Activated T-helper 1 cell treated with anti-CD3 and anti-CD28 coated beads, Interleukin-12 subunit alpha, Interleukin-12 subunit beta, Interleukin-2, Interleukin-4 antibody, amounts not matched to agents 30 ng/mL and 10 ng/mL and 1 ng/mL, durations not matched to agents 14 hours and 24 hours and 36 hours (primary cell): ENCODE measurements at regions of chr1 and their contacts with region 1.

Region 1: GRCh38 chr1:198088360-198089071 is 68.3 kb upstream of the NEK7 start:
- DNase-seq: no peak
- H3K4me3 Mint-ChIP-seq: no peak overlapping the region
- H3K27ac Mint-ChIP-seq: no peak overlapping the region
- H3K4me1 Mint-ChIP-seq: peaks cover 8% of the 10 kb centered on the region
- H3K27me3 Mint-ChIP-seq: peaks cover 5% of the 10 kb centered on the region

Region 2: DNA sequence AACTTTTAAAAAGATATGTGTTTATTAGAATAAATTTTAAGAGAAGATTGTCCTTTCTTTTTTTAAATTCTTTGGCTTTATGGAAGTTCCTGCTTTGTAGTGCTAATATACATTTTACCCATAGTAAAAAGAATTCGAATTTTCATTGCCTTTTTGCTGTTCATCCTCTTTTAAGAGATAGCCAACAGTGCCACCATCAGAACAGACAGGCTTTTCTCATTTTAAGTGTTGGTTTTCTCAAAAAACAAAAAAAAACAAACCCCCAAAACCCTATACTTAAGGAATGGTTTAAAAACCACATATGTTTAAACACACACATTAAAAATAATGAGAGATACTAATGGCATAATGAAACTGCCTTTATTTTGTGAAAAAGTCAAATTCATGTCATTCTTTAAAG is 187.1 kb after region 1 on chr1:
- intact Hi-C with region 1: loop called (anchors 5 kb)
- DNase-seq: no peak
- H3K4me3 Mint-ChIP-seq: no peak overlapping the region
- H3K27ac Mint-ChIP-seq: no peak overlapping the region
- H3K4me1 Mint-ChIP-seq: no peaks in the 10 kb centered on the region
- H3K27me3 Mint-ChIP-seq: no peaks in the 10 kb centered on the region

Region 3: GRCh38 chr1:198328458-198329127 is 240.1 kb after region 1 on chr1:
- intact Hi-C with region 1: no loop called
- DNase-seq: no peak
- H3K4me3 Mint-ChIP-seq: no peak overlapping the region
- H3K27ac Mint-ChIP-seq: no peak overlapping the region
- H3K4me1 Mint-ChIP-seq: no peaks in the 10 kb centered on the region
- H3K27me3 Mint-ChIP-seq: peaks cover 15% of the 10 kb centered on the region

Region 4: GRCh38 chr1:198359024-198359653 is 270.6 kb after region 1 on chr1:
- intact Hi-C with region 1: loop called (anchors 1 kb)
- DNase-seq: no peak
- H3K4me3 Mint-ChIP-seq: no peak overlapping the region
- H3K27ac Mint-ChIP-seq: no peak overlapping the region
- H3K4me1 Mint-ChIP-seq: no peaks in the 10 kb centered on the region
- H3K27me3 Mint-ChIP-seq: no peaks in the 10 kb centered on the region